KBM-7 (cell line): ENCODE measurements at regions of chr14 and their contacts with region 1.

Region 1: DNA sequence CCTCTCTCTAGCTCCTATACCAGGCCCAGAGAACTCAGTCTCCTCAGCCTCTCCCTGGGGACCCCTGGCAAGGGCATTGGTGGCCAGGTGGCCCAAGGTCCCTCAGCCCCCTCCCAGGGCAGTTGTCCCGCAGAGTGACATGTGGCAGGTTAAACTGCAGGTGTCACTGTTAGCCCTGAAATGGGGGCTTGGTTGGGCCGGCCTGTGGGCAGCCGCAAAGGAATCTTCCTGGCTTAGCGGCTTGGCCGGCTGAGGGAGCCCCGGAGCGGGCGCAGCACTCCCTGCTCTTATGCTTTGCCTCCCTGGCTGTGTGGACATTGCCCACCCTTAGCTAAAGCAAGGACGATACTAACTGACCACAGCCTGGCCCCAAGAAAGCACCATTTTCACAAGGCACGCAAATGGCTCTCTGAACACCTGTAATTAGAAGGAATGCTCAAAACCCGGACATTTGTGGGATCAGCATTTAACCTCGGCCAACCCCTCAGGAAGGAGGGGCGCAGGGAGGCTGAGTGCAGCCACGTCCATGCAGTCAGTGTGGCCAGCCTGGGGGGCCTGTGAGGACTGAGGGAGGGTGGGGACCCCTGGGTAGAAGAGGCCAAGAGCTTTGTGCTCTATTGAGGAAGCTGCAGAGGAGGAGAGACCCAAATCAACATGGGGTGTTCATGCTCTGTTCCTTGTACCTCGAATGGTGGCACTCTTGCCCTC is 82.2 kb downstream of the PAPOLA start:
- DNase-seq: peak; percentile 64

Region 2: DNA sequence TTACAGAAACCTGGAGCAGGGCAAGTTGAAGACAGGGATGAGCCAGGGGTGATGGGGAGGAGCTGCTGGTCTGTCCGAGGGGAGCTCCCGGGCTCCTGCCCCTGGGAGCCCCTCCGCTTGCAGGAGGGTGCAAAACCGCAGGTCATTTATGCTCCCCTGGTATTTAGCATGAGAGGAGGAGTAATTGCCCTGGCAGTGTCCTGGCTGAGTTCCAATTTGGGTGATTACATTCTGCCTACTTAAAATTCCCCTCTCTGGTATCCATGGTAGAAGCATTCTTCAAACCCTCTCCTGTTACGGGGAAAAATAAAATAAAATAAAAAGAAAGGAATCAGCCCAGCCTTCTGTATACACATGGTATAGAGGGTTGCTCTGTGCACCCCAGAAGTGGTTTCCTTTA is 151.2 kb after region 1 on chr14:
- in situ Hi-C with region 1: loop called (anchors 10 kb)
- DNase-seq: no peak